Dorsolateral prefrontal cortex (tissue), 120 donors: ENCODE measurements at regions of chr20 and their contacts with region 1.

Region 1: DNA sequence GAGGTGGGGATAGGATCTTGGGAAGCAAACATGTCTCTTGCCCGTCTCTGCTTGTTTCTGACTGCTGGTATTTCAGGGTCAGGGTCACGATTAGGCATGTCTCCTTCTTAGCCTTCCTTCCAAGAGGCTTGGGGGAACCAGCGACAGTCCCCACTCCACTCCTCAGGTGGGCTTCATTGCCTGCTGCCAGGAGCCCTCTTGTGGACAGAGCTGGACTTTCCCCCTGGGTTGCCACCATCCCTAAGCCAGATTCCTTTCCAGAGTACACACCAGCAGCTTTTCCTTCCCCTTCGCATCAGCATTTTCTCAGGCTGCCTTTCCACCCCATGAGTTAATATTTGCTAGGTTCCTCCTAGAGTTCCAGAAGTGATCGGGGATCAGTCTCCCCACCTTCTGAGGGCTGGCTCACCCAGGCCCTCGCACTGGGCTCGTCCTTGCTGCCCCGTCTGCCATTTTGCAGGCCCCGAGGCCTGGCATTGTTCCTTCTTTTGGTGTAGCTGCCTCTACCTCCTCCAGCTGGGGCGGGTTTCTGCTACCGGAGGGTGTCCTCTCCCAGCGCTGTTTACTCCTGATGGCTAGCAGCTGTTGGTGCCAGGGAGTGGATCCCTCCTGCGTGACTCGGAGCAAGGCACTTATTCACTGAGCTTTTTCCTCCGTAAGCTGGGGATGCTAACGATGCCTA is 8.8 kb upstream of the C20orf144 start:
- DNase-seq: peak in 8 of 10 donors; percentile 54 to 83 (median 74)
- H3K4me3 ChIP-seq: peak overlapping the region in 42 of 59 donors; percentile 6 to 48 (median 30)
- H3K27ac ChIP-seq: peak overlapping the region in 47 of 59 donors; percentile 16 to 86 (median 58)
- H3K27me3 ChIP-seq: no peaks in the 10 kb centered on the region
- CTCF ChIP-seq: peak; percentile 44 to 90 (median 78)

Region 2: DNA sequence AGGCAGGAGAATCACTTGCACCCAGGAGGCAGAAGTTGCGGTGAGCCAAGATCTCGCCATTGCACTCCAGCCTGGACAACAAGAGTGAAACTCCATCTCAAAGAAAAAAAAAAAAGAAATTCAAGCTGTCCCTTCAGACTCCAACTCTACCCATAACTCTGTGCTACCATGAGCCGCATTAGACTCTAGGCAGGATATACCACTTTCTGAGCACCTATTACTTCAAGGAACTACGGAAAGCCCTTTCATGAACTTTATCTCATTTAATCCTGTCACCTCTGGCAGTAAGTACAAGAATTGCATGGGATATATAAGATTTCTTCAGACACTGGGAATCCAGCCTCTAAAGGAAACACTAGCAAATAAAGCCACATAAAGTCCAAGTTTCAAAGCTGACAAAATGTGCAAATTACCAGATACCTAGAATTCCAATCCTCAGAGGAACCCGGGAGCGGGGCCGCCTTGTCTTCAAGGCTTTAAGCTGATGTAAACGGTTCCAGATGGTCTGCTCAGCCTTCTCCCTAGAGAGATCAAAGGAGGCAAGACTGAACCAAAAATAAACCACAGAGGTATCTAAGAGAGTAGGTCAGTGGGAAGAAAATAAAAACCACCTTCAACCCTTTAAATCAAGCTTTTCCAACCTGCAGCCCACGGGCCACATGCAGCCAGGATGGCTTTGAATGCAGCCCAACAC is 261.5 kb before region 1 on chr20:
- intact Hi-C with region 1: loop called in 1 of 2 experiments (anchors 10 kb)
- DNase-seq: no peak
- H3K4me3 ChIP-seq: no peak overlapping the region
- H3K27ac ChIP-seq: no peak overlapping the region
- H3K27me3 ChIP-seq: no peaks in the 10 kb centered on the region
- CTCF ChIP-seq: no peak

Region 3: GRCh38 chr20:33459599-33459998 is 193.8 kb before region 1 on chr20:
- intact Hi-C with region 1: loop called (anchors 1 to 5 kb)
- DNase-seq: no peak
- H3K4me3 ChIP-seq: no peak overlapping the region
- H3K27ac ChIP-seq: no peak overlapping the region
- H3K27me3 ChIP-seq: no peaks in the 10 kb centered on the region
- CTCF ChIP-seq: no peak

Region 4: GRCh38 chr20:33781133-33781532 is 127.8 kb after region 1 on chr20:
- intact Hi-C with region 1: no loop called
- DNase-seq: no peak
- H3K4me3 ChIP-seq: no peak overlapping the region
- H3K27ac ChIP-seq: no peak overlapping the region
- H3K27me3 ChIP-seq: no peaks in the 10 kb centered on the region
- CTCF ChIP-seq: no peak